ENCODE measurements at regions of chr5 and their contacts with region 1.

Region 1: GRCh38 chr5:170338933-170339779 is 41.6 kb upstream of the LCP2 start:
- DNase-seq: peak; percentile 86
- H3K4me3 Mint-ChIP-seq: no peak overlapping the region
- H3K27ac Mint-ChIP-seq: peak overlapping the region; percentile 66
- H3K4me1 Mint-ChIP-seq: peaks cover 46% of the 10 kb centered on the region
- H3K27me3 Mint-ChIP-seq: no peaks in the 10 kb centered on the region

Region 2: GRCh38 chr5:170100066-170100943 is 238.9 kb before region 1 on chr5:
- CTCF ChIA-PET with region 1: no interaction called
- intact Hi-C with region 1: loop called (anchors 1 kb)
- DNase-seq: peak; percentile 88
- H3K4me3 Mint-ChIP-seq: no peak overlapping the region
- H3K27ac Mint-ChIP-seq: no peak overlapping the region
- H3K4me1 Mint-ChIP-seq: no peaks in the 10 kb centered on the region
- H3K27me3 Mint-ChIP-seq: peaks cover 2% of the 10 kb centered on the region

Region 3: GRCh38 chr5:170225326-170226128 is 113.6 kb before region 1 on chr5:
- CTCF ChIA-PET with region 1: interaction called, 165 read pairs
- intact Hi-C with region 1: loop called (anchors 1 kb)
- DNase-seq: peak; percentile 91
- H3K4me3 Mint-ChIP-seq: no peak overlapping the region
- H3K27ac Mint-ChIP-seq: no peak overlapping the region
- H3K4me1 Mint-ChIP-seq: peaks cover 7% of the 10 kb centered on the region
- H3K27me3 Mint-ChIP-seq: no peaks in the 10 kb centered on the region

Region 4: GRCh38 chr5:170253844-170254455 is 85.2 kb before region 1 on chr5:
- CTCF ChIA-PET with region 1: interaction called, 12 read pairs
- intact Hi-C with region 1: loop called (anchors 1 kb)
- DNase-seq: peak; percentile 86
- H3K4me3 Mint-ChIP-seq: no peak overlapping the region
- H3K27ac Mint-ChIP-seq: peak overlapping the region; percentile 83
- H3K4me1 Mint-ChIP-seq: peaks cover 62% of the 10 kb centered on the region
- H3K27me3 Mint-ChIP-seq: no peaks in the 10 kb centered on the region

Region 5: GRCh38 chr5:170278611-170279452 is 60.3 kb before region 1 on chr5:
- CTCF ChIA-PET with region 1: interaction called, 136 read pairs
- intact Hi-C with region 1: loop called (anchors 1 kb)
- DNase-seq: peak; percentile 90
- H3K4me3 Mint-ChIP-seq: peak overlapping the region; percentile 45
- H3K27ac Mint-ChIP-seq: peak overlapping the region; percentile 83
- H3K4me1 Mint-ChIP-seq: peaks cover 95% of the 10 kb centered on the region
- H3K27me3 Mint-ChIP-seq: no peaks in the 10 kb centered on the region

Region 6: DNA sequence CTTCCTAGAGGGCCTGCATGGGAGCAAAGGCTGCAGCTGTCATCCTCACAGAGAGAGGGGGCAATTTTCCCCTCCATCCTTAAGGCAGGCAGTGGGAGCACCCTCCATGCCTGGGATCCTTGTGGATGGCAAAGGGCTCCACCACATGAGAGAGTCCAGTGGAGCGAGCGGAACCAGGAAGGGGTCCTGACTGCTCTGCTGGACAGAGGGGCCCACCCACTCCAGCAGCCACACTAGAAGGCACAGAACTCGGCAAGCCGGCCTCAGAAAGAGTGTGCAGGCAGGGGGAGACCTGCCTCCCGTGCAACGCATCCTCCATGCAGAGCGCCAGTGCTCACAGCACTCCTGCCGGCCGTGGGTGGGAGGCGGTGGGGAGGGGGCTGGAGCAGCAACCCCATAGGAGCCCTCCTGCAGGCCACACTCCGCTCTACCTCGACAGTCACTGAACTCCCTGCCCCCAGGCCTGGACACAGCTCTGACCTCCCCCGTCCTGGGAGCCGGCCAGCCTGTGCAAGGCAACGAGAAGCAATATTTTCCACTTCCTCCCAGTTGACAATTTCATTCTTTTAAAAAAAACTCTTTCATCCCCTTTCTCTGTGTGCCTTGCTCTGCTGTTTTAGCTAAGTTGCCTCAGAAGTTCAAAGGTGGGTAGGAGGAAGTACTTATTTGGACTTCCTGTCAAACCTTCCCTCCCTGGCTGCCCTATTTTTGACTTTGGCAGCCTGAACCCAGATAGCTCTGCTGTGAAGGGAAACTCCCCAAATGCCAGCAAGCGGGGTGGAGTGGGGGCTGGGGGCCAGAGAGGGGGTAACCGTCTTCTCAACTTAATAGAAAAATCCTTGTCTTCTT is 36.3 kb before region 1 on chr5:
- CTCF ChIA-PET with region 1: interaction called, 195 read pairs
- intact Hi-C with region 1: no loop called
- DNase-seq: peak; percentile 69
- H3K4me3 Mint-ChIP-seq: peak overlapping the region; percentile 78
- H3K27ac Mint-ChIP-seq: peak overlapping the region; percentile 96
- H3K4me1 Mint-ChIP-seq: peaks cover 93% of the 10 kb centered on the region
- H3K27me3 Mint-ChIP-seq: no peaks in the 10 kb centered on the region

Region 7: DNA sequence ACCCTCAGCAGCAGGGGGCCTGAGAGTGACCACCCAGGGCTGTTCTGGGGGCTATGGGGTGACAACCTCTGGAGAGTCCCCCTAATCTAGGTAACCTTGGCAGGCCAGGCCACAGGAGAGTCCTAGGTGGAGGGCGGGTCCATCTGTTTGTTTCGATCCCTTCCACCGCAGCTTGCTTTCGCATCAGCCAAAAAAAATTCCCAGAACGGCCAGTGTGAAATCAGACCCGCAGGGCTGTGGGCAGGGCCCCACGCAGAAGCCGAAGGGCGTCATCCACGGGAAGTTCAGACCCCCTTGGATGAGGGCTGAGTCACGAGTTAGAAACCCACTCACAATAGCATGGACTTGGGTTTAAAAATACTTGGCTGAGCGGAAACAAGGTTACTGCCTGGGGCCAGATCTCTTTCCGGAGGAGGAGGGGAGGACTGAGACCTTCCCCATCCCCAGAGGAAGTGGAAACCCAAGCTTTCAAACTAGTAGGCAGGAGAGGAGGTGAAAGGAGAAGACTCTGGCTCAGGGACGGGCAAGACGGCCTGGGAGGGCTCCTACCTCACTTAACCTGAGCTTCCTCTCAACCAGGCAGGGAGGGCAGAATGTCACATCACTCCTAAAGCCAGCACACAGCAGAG is 1840.3 kb after region 1 on chr5:
- CTCF ChIA-PET with region 1: no interaction called
- intact Hi-C with region 1: loop called (anchors 10 kb)
- DNase-seq: peak; percentile 67
- H3K4me3 Mint-ChIP-seq: peak overlapping the region; percentile 70
- H3K27ac Mint-ChIP-seq: peak overlapping the region; percentile 94
- H3K4me1 Mint-ChIP-seq: peaks cover 92% of the 10 kb centered on the region
- H3K27me3 Mint-ChIP-seq: no peaks in the 10 kb centered on the region

Measured in activated naive CD4-positive, alpha-beta T cell treated with anti-CD3 and anti-CD28 coated beads for 36 hours (primary cell).